Ascending aorta (tissue), 2 donors: ENCODE measurements at regions of chr6 and their contacts with region 1.

Region 1: GRCh38 chr6:121436960-121437850 is 1.8 kb downstream of the GJA1 start:
- DNase-seq: peak in 1 of 2 donors; percentile 71
- H3K4me3 ChIP-seq: peak overlapping the region; percentile 67 to 70
- H3K27ac ChIP-seq: peak overlapping the region; percentile 87 to 93
- H3K4me1 ChIP-seq: peaks cover 1 to 10% of the 10 kb centered on the region in 2 donors
- H3K27me3 ChIP-seq: no peaks in the 10 kb centered on the region
- CTCF ChIP-seq: no peak

Region 2: GRCh38 chr6:121491576-121491975 is 54.4 kb after region 1 on chr6:
- intact Hi-C with region 1: loop called (anchors 2 kb)
- DNase-seq: no peak
- H3K4me3 ChIP-seq: no peak overlapping the region
- H3K27ac ChIP-seq: peak overlapping the region; percentile 48 to 75
- H3K4me1 ChIP-seq: peaks cover 3 to 19% of the 10 kb centered on the region in 2 donors
- H3K27me3 ChIP-seq: no peaks in the 10 kb centered on the region
- CTCF ChIP-seq: no peak

Region 3: GRCh38 chr6:121521892-121522664 is 84.9 kb after region 1 on chr6:
- intact Hi-C with region 1: loop called (anchors 2 kb)
- DNase-seq: peak in 1 of 2 donors; percentile 87
- H3K4me3 ChIP-seq: peak overlapping the region in 1 of 2 donors; percentile 44
- H3K27ac ChIP-seq: peak overlapping the region; percentile 86 to 89
- H3K4me1 ChIP-seq: peaks cover 9 to 45% of the 10 kb centered on the region in 2 donors
- H3K27me3 ChIP-seq: no peaks in the 10 kb centered on the region
- CTCF ChIP-seq: no peak

Region 4: DNA sequence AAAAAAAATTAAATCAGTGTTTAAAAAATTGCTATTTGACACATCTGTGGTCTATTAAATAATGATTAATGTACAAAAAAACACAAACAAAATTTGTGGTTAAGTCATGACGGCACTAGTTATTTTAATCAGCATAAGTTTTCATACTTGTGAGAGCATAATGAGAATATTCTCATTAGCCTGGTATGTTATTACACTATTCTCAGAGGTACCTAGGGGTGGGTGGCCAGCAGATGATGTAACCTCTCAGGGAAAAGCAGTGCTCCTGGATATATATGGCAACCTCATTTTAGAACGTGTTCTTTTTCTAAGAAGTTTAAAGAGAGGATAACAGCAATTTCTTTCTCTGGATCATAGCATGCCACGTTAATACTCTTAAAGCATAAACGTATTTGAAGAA is 107.5 kb after region 1 on chr6:
- intact Hi-C with region 1: loop called (anchors 5 kb)
- DNase-seq: no peak
- H3K4me3 ChIP-seq: no peak overlapping the region
- H3K27ac ChIP-seq: peak overlapping the region; percentile 74 to 79
- H3K4me1 ChIP-seq: peaks cover 3 to 8% of the 10 kb centered on the region in 2 donors
- H3K27me3 ChIP-seq: no peaks in the 10 kb centered on the region
- CTCF ChIP-seq: no peak

Region 5: GRCh38 chr6:121584586-121585369 is 147.6 kb after region 1 on chr6:
- intact Hi-C with region 1: loop called (anchors 5 kb)
- DNase-seq: no peak
- H3K4me3 ChIP-seq: no peak overlapping the region
- H3K27ac ChIP-seq: peak overlapping the region; percentile 57 to 69
- H3K4me1 ChIP-seq: peaks cover 0 to 15% of the 10 kb centered on the region in 2 donors
- H3K27me3 ChIP-seq: no peaks in the 10 kb centered on the region
- CTCF ChIP-seq: no peak

Region 6: DNA sequence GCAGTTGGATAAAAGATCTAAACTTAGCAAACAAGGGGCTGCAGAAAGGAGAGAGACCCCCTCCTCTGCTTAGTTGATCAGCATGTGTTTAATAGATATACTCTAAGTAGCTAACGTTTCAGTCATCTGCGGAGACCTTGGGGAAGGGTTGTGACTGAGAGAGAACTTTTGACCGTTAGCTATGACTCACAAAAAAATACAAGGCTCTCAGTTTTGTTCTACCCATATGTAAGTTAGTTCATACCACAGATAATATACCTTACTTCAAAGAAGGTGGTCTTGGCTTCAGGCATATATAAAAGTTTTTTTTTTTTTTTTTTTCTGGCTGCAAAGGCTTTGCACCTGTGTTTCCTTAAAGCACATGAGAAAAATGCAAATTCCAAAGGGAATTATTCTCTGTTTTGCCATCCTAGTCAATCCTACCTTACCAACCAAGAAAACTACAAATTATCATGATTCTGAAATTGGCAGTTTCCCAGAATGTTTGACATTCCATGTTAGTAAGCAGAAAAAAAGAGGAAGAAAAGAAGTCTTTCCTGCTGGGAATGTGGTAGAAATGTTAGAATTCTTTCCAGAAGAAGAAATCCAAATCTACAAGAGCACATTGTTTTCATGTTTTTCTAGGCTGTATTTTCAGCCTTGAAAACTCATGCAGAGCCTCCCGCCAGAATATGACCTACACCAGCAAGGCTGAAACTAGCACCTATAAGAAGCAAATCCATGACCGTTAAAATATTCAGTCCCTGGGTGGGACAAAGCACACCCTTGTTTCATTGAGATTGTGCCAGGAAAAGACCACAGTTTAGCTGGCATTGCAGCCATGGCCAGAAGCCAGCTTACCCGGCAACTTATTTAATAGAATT is 257.4 kb after region 1 on chr6:
- intact Hi-C with region 1: loop called (anchors 5 kb)
- DNase-seq: no peak
- H3K4me3 ChIP-seq: no peak overlapping the region
- H3K27ac ChIP-seq: peak overlapping the region; percentile 59 to 69
- H3K4me1 ChIP-seq: peaks cover 0 to 24% of the 10 kb centered on the region in 2 donors
- H3K27me3 ChIP-seq: no peaks in the 10 kb centered on the region
- CTCF ChIP-seq: no peak